Thyroid gland (tissue), 4 donors: ENCODE measurements at regions of chr18 and their contacts with region 1.

Region 1: GRCh38 chr18:67217551-67218166 is 298.9 kb downstream of the DSEL start:
- DNase-seq: peak; percentile 33 to 53
- H3K4me3 ChIP-seq: no peak overlapping the region
- H3K27ac ChIP-seq: no peak overlapping the region
- H3K4me1 ChIP-seq: no peaks in the 10 kb centered on the region
- H3K27me3 ChIP-seq: no peaks in the 10 kb centered on the region
- CTCF ChIP-seq: peak; percentile 45 to 75 (median 70)
- POLR2A ChIP-seq: no peak

Region 2: DNA sequence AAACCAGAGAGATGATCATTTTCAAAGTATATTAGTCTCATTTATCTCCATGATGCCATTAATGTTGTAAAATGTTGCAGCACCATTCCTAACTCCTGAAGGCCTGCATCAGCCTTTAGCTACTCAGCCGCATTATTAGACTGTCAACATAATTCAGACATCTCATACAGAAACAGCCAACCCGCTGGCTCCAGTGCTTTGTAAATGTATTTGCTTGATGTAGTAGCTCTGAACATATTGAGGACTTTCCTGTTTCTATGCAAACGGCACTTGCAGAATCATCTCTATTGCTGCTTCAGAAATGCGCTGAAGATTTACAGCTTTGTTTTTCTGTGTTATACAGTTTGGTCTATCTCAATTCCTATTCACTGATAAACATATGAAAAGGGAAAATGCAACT is 73.3 kb before region 1 on chr18:
- intact Hi-C with region 1: no loop called
- DNase-seq: no peak
- H3K4me3 ChIP-seq: no peak overlapping the region
- H3K27ac ChIP-seq: no peak overlapping the region
- H3K4me1 ChIP-seq: no peaks in the 10 kb centered on the region
- H3K27me3 ChIP-seq: no peaks in the 10 kb centered on the region
- CTCF ChIP-seq: no peak
- POLR2A ChIP-seq: no peak

Region 3: GRCh38 chr18:68660354-68661183 is 1442.9 kb after region 1 on chr18:
- intact Hi-C with region 1: loop called (anchors 5 kb)
- DNase-seq: no peak
- H3K4me3 ChIP-seq: no peak overlapping the region
- H3K27ac ChIP-seq: no peak overlapping the region
- H3K4me1 ChIP-seq: no peaks in the 10 kb centered on the region
- H3K27me3 ChIP-seq: no peaks in the 10 kb centered on the region
- CTCF ChIP-seq: peak in 5 of 6 experiments; percentile 6 to 57 (median 48)
- POLR2A ChIP-seq: no peak